CD14-positive monocyte (primary cell): ENCODE measurements at regions of chr7 and their contacts with region 1.

Region 1: DNA sequence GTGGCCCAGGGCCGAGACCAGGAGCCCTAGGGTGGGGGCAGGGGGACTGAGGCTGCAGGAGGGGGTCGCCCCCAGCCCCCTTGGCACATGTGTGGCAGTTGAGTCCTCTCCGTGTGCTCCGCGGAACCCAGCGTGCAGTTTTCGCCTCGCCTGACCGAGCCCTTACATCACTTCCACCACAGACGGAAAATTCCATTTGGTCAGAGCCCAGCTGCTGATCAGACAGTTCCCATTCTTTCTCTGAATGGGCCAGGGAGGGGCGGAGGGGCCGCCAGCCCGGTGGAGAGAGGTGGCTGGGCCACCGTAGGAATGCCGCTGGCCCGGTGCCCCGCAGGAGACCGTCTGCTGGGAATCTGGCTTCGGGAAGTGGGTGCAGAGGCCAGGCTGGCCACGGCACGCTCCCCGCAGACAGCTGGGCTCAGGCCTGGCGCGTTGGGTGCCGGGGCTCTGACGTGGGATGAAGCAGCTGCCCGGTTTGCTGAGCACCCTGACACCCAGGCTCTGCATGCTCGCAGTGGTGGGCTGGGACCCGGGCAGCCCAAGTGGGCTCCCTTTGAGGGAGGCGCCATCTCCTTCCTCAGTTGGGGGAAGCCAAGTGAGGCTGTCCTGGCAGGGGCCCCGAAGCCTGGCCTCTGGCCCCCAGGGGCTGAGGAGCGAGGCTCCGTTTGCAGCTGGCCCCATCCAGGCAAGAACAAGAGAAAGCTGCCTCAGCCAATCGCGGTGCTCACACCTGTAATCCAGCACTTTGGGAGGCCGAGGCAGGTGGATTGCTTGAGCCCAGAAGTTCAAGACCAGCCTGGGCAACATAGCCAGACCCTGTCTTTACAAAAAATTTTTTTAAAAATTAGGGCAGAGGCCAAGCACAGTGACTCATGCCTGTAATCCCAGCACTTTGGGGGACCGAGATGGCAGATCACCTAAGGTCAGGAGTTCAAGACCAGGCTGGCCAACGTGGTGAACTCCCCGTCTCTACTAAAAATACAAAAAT is 9.9 kb downstream of the TTYH3 start:
- DNase-seq: peak; percentile 73 to 86 (median 80)
- H3K4me3 ChIP-seq: peak overlapping the region in 1 of 3 experiments; percentile 40
- H3K4me3 Mint-ChIP-seq: peak overlapping the region; percentile 64 to 67
- H3K27ac ChIP-seq: peak overlapping the region; percentile 63 to 71
- H3K27ac Mint-ChIP-seq: peak overlapping the region; percentile 80 to 93 (median 86)
- H3K4me1 ChIP-seq: peaks cover 91 to 92% of the 10 kb centered on the region in 2 donors
- H3K4me1 Mint-ChIP-seq: peaks cover 78% of the 10 kb centered on the region
- H3K27me3 ChIP-seq: no peaks in the 10 kb centered on the region
- H3K27me3 Mint-ChIP-seq: peaks cover 0 to 2% (median 0%) of the 10 kb centered on the region in 3 donors
- CTCF ChIP-seq: no peak

Region 2: GRCh38 chr7:2540641-2541051 is 101.1 kb before region 1 on chr7:
- intact Hi-C with region 1: loop called in 1 of 2 experiments (anchors 5 kb)
- DNase-seq: no peak
- H3K4me3 ChIP-seq: no peak overlapping the region
- H3K4me3 Mint-ChIP-seq: no peak overlapping the region
- H3K27ac ChIP-seq: no peak overlapping the region
- H3K27ac Mint-ChIP-seq: peak overlapping the region in 1 of 7 donors; percentile 46
- H3K4me1 ChIP-seq: peaks cover 3 to 11% of the 10 kb centered on the region in 2 donors
- H3K4me1 Mint-ChIP-seq: peaks cover 15% of the 10 kb centered on the region
- H3K27me3 ChIP-seq: no peaks in the 10 kb centered on the region
- H3K27me3 Mint-ChIP-seq: peaks cover 0 to 6% (median 0%) of the 10 kb centered on the region in 3 donors
- CTCF ChIP-seq: no peak

Region 3: DNA sequence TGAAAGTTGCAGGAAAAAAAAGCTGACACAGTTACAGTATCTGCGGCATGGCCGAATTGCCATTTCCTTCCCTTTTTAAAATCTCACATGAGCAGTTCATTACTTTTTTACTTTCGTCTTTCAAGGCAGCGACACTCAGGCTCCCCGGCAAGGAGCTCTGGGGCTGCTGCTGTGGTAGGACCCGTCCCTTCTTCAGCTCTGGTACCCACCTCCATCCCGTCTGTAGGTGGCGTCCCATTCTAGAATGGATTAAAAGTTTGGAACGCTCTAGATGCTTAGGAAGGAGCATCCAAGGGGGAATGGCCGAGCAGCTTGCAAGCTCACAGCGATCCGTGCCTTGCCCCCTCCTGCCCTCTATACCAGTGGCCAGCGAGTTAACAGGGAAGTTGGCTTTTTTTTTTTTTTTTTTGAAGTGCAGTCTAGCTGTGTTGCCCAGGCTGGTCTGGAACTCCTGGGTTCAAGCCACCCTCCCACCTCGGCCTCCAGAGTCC is 32.7 kb before region 1 on chr7:
- intact Hi-C with region 1: loop called (anchors 5 kb)
- DNase-seq: peak; percentile 80 to 83 (median 81)
- H3K4me3 ChIP-seq: peak overlapping the region; percentile 30 to 68 (median 30)
- H3K4me3 Mint-ChIP-seq: peak overlapping the region; percentile 77 to 88
- H3K27ac ChIP-seq: peak overlapping the region; percentile 84 to 87
- H3K27ac Mint-ChIP-seq: peak overlapping the region; percentile 94 to 99 (median 95)
- H3K4me1 ChIP-seq: peaks cover 49 to 80% of the 10 kb centered on the region in 2 donors
- H3K4me1 Mint-ChIP-seq: peaks cover 64% of the 10 kb centered on the region
- H3K27me3 ChIP-seq: no peaks in the 10 kb centered on the region
- H3K27me3 Mint-ChIP-seq: peaks cover 0 to 3% (median 2%) of the 10 kb centered on the region in 3 donors
- CTCF ChIP-seq: peak; percentile 42

Region 4: DNA sequence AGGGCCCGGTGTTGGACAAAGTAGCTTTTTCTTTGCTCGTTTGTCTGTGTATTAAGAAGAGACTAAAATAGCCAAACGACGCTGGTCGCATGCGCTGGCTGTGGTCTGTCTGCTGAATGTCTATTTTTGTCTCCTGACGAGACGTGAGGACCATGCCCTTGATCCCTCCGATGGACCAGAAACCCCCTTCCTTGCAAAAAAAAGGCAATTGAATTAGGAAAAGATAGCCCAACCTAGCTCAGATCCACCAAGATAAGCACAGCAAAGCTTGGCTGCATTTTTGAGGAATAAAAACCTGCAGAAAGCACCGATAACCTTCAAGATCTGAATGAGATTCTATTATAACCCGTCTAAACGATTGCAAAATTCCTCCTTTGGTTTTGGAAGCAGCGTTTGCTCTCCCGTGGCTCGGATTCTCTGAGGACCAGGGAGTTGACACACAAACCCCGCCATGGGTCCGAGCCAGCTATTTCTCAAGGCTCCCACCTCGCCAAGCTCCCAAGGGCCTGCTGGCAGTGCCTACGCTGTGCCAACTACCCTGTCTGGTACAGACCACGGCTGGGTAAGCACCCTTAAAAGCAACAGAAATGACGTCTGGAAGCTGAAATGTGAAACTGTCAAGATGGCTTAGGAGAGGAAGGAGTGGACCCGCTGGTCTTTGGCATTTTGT is 27.6 kb before region 1 on chr7:
- intact Hi-C with region 1: loop called (anchors 5 kb)
- DNase-seq: no peak
- H3K4me3 ChIP-seq: peak overlapping the region in 1 of 3 experiments; percentile 60
- H3K4me3 Mint-ChIP-seq: peak overlapping the region; percentile 72 to 85
- H3K27ac ChIP-seq: no peak overlapping the region
- H3K27ac Mint-ChIP-seq: peak overlapping the region in 5 of 7 donors; percentile 14 to 78 (median 51)
- H3K4me1 ChIP-seq: peaks cover 36 to 65% of the 10 kb centered on the region in 2 donors
- H3K4me1 Mint-ChIP-seq: peaks cover 49% of the 10 kb centered on the region
- H3K27me3 ChIP-seq: no peaks in the 10 kb centered on the region
- H3K27me3 Mint-ChIP-seq: peaks cover 0 to 6% (median 3%) of the 10 kb centered on the region in 3 donors
- CTCF ChIP-seq: no peak